ENCODE measurements at regions of chr15 and their contacts with region 1.

Region 1: DNA sequence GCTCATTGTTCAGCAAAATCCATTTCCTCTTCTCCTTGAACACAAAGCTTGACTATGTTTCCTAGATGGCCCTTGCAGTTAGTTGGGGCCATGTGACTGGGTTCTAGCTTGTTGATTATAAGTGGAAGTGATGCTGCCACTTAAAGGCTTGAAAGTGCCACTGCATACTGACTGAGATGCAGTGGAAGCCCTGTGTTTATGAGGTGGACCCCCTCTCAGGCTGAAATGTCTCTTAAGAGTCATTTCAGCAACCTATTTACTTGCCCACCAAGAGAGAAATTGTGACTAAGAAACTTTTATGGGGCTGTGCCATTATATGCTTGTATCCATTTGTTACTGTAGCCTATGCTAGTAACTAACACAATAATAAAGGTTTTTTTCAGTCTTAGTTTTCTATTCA is 8.4 kb upstream of the ANP32A start:
- DNase-seq: peak in 1 of 5 donors; percentile 30
- H3K4me3 ChIP-seq: no peak overlapping the region
- H3K4me3 Mint-ChIP-seq: no peak overlapping the region
- H3K27ac ChIP-seq: no peak overlapping the region
- H3K27ac Mint-ChIP-seq: peak overlapping the region in 1 of 8 donors; percentile 28
- H3K4me1 ChIP-seq: peaks cover 5% of the 10 kb centered on the region
- H3K4me1 Mint-ChIP-seq: peaks cover under 1 to 6% (median 4%) of the 10 kb centered on the region in 3 donors
- H3K27me3 ChIP-seq: no peaks in the 10 kb centered on the region
- H3K27me3 Mint-ChIP-seq: peaks cover 9 to 18% of the 10 kb centered on the region in 2 donors

Region 2: DNA sequence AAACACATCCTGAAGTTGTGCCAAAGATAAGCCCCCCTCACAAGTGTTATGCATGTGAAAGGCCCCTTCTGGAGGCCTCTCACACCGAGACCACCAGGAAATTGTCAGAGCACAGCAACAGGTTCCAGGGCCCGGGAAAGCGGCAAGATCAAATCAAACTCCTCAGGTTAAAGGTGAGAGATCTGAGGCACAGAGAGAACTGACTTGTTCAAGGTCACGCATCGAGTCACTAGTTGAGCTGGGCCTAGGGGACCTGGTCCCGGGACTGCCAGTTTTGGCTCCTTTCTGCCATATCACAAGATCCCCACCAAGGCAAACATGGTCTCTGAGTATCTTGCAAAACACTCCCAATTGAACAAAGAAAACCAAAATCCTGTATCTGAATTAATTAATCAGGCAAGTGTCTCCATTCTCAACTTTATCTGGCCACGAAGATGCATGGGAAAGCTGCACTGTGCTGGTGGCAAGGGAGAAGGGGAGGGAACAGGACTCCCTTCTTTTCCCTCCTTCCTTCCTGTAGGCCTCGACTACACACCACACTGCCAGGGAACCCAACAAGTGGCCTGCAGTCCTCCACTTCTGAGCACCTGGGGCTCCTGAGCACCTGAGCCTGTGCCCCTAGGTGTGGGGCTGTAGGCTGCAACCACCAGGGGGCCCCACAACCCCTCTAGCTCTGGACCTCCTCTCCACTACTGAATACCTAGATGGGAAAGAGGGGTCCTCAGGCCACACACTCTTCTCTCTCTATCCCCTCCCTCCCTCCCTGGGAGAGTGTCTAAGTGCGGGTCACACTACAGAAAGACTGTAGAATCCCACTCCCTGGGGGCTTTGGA is 45.6 kb before region 1 on chr15:
- CTCF ChIA-PET with region 1: interaction called, 19 read pairs
- POLR2A ChIA-PET with region 1: no interaction called
- DNase-seq: peak; percentile 52 to 75 (median 58)
- H3K4me3 ChIP-seq: no peak overlapping the region
- H3K4me3 Mint-ChIP-seq: no peak overlapping the region
- H3K27ac ChIP-seq: no peak overlapping the region
- H3K27ac Mint-ChIP-seq: peak overlapping the region in 7 of 8 donors; percentile 21 to 93 (median 77)
- H3K4me1 ChIP-seq: peaks cover 10% of the 10 kb centered on the region
- H3K4me1 Mint-ChIP-seq: peaks cover 23 to 34% (median 29%) of the 10 kb centered on the region in 3 donors
- H3K27me3 ChIP-seq: no peaks in the 10 kb centered on the region
- H3K27me3 Mint-ChIP-seq: no peaks in the 10 kb centered on the region

Measured in CD8-positive, alpha-beta memory T cell (primary cell).